ENCODE measurements at regions of chr22 and their contacts with region 1.

Region 1: DNA sequence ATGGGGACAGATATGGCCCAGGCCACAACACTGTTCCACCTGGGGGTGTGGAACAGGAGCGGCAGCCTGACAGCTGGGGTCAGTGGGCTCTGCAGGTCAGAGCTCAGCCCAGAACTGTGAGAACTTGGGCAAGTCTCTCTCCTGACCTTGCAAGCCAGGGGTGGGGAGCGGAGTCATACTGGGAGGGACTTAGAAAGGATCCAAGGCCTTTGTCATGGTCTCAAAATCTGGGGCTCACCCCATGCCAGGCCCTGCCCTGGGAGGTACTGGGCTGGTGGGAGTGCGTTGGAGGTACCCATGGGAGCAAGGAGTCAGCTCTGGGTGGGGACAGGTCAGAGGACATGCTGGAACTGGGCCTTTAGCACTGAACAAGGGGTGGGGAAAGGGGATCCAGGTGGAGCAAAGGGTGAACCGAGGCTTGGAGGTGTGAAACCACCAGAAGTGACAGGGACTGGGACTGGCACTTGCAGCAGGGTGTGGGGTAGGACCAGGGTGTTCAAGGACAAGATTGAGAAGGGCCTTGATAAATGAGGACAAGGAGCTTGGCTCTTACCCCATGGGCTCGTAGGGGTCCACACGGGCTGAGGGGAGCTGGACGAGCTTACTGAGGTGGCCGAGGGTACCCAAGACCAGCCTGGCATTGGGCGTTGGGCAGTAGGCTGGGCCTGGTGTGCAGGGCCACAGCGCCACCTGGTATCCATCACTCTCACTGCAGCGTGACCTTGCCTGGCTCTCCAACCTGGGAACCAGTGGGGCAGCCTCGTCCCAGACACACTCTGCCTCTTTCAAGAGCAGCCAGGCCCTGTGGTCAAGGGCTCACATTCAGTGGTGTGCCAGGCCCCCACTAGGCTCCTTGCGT is 7.4 kb upstream of the PMM1 start:
- DNase-seq: peak; percentile 72
- H3K4me3 Mint-ChIP-seq: no peak overlapping the region
- H3K27ac Mint-ChIP-seq: no peak overlapping the region
- H3K4me1 Mint-ChIP-seq: no peaks in the 10 kb centered on the region
- H3K27me3 Mint-ChIP-seq: no peaks in the 10 kb centered on the region
- CTCF ChIP-seq: peak; percentile 77

Region 2: GRCh38 chr22:41551877-41552582 is 45.0 kb before region 1 on chr22:
- CTCF ChIA-PET with region 1: interaction called, 8 read pairs
- intact Hi-C with region 1: loop called (anchors 5 kb)
- DNase-seq: no peak
- H3K4me3 Mint-ChIP-seq: no peak overlapping the region
- H3K27ac Mint-ChIP-seq: no peak overlapping the region
- H3K4me1 Mint-ChIP-seq: peaks cover 8% of the 10 kb centered on the region
- H3K27me3 Mint-ChIP-seq: peaks cover 52% of the 10 kb centered on the region
- CTCF ChIP-seq: no peak

Region 3: GRCh38 chr22:41576877-41577276 is 20.1 kb before region 1 on chr22:
- CTCF ChIA-PET with region 1: interaction called, 16 read pairs
- intact Hi-C with region 1: loop called (anchors 1 kb)
- DNase-seq: peak; percentile 79
- H3K4me3 Mint-ChIP-seq: no peak overlapping the region
- H3K27ac Mint-ChIP-seq: no peak overlapping the region
- H3K4me1 Mint-ChIP-seq: no peaks in the 10 kb centered on the region
- H3K27me3 Mint-ChIP-seq: peaks cover 1% of the 10 kb centered on the region
- CTCF ChIP-seq: peak; percentile 71

Measured in Calu3 (cell line).